CD8-positive, alpha-beta T cell (primary cell): ENCODE measurements at regions of chr5 and their contacts with region 1.

Region 1: DNA sequence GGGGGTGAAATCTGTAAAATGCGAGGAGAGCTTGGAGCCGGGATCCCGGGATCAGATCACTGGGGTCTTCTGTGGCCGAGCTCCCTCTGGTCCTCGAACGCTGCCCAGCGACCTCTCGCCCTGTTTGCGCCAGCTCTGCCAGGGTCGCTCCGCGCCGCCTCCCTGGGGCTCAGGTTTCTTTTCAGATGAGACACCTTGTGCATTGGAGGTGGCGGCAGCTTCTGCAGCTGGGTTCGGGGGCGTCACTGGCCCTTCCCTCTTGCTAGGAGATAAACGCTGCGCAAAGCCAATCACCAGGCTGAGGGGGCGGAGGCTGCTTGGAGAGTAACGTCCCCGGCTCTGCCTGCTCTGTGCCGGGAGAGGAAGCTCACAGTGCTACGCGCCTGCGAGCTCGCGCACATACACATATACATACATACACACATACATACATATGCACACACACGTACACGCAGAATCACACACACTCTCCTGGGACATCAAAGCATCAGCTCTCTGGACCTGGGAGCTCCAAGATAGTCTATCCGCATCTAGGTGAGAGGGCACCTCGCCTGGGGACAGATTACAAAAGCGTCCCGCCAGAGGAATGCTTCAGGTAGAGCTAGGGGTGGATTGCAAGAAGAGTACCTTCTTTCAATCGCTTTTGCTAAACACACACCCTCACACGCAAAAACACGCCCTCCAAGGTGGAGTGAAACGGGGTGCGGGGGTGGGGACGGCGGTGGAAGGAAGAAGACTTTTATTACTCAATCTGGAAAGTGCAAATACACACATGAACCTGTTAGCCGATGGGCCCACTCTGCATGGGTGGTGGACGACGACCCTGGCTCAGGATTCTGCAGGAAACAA is at the start of gene ST8SIA4:
- DNase-seq: peak; percentile 81 to 96 (median 92)
- ATAC-seq: peak; percentile 72
- H3K4me3 ChIP-seq: peak within 1 kb of the TSS; percentile 72 to 92
- H3K4me3 Mint-ChIP-seq: peak within 1 kb of the TSS; percentile 88
- H3K27ac ChIP-seq: peak within 1 kb of the TSS; percentile 70 to 89
- H3K27ac Mint-ChIP-seq: peak within 1 kb of the TSS; percentile 97
- H3K4me1 ChIP-seq: peaks cover 19% of the 10 kb centered on the region
- H3K4me1 Mint-ChIP-seq: peaks cover 56% of the 10 kb centered on the region
- H3K27me3 ChIP-seq: no peaks in the 10 kb centered on the region
- H3K27me3 Mint-ChIP-seq: no peaks in the 10 kb centered on the region
- CTCF ChIP-seq: no peak
- total RNA-seq, gene ST8SIA4: 15.6 to 16.4 TPM

Region 2: GRCh38 chr5:98928873-98929696 is 1974.2 kb before region 1 on chr5 and contains the start of gene CHD1:
- CTCF ChIA-PET with region 1: no interaction called
- POLR2A ChIA-PET with region 1: interaction called, 12 read pairs
- intact Hi-C with region 1: loop called (anchors 1 to 5 kb)
- DNase-seq: peak; percentile 91 to 99 (median 94)
- ATAC-seq: peak; percentile 67
- H3K4me3 ChIP-seq: peak within 1 kb of the TSS; percentile 97 to 100
- H3K4me3 Mint-ChIP-seq: peak within 1 kb of the TSS; percentile 96
- H3K27ac ChIP-seq: peak within 1 kb of the TSS; percentile 100
- H3K27ac Mint-ChIP-seq: peak within 1 kb of the TSS; percentile 100
- H3K4me1 ChIP-seq: peaks cover 65% of the 10 kb centered on the region
- H3K4me1 Mint-ChIP-seq: peaks cover 69% of the 10 kb centered on the region
- H3K27me3 ChIP-seq: no peaks in the 10 kb centered on the region
- H3K27me3 Mint-ChIP-seq: no peaks in the 10 kb centered on the region
- CTCF ChIP-seq: no peak
- total RNA-seq, gene CHD1: 319 to 327 TPM

Region 3: GRCh38 chr5:100535060-100536005 is 367.9 kb before region 1 on chr5 and contains the start of gene FAM174A:
- CTCF ChIA-PET with region 1: interaction called, 4 read pairs
- POLR2A ChIA-PET with region 1: interaction called, 8 read pairs
- intact Hi-C with region 1: loop called (anchors 1 to 5 kb)
- DNase-seq: peak; percentile 88 to 98 (median 94)
- ATAC-seq: peak; percentile 86
- H3K4me3 ChIP-seq: peak within 1 kb of the TSS; percentile 92 to 93
- H3K4me3 Mint-ChIP-seq: peak within 1 kb of the TSS; percentile 88
- H3K27ac ChIP-seq: peak within 1 kb of the TSS; percentile 90 to 93
- H3K27ac Mint-ChIP-seq: peak within 1 kb of the TSS; percentile 96
- H3K4me1 ChIP-seq: peaks cover 16% of the 10 kb centered on the region
- H3K4me1 Mint-ChIP-seq: peaks cover 39% of the 10 kb centered on the region
- H3K27me3 ChIP-seq: no peaks in the 10 kb centered on the region
- H3K27me3 Mint-ChIP-seq: no peaks in the 10 kb centered on the region
- CTCF ChIP-seq: no peak
- total RNA-seq, gene FAM174A: 4.9 to 6.5 TPM

Region 4: GRCh38 chr5:100731768-100732167 is 171.5 kb before region 1 on chr5:
- CTCF ChIA-PET with region 1: no interaction called
- POLR2A ChIA-PET with region 1: interaction called, 3 read pairs
- intact Hi-C with region 1: loop called in 1 of 2 experiments (anchors 5 kb)
- DNase-seq: peak in 5 of 9 experiments; percentile 2 to 69 (median 18)
- ATAC-seq: peak; percentile 92
- H3K4me3 ChIP-seq: peak overlapping the region; percentile 8 to 34
- H3K4me3 Mint-ChIP-seq: peak overlapping the region; percentile 75
- H3K27ac ChIP-seq: peak overlapping the region in 1 of 2 experiments; percentile 43
- H3K27ac Mint-ChIP-seq: peak overlapping the region; percentile 55
- H3K4me1 ChIP-seq: no peaks in the 10 kb centered on the region
- H3K4me1 Mint-ChIP-seq: peaks cover 12% of the 10 kb centered on the region
- H3K27me3 ChIP-seq: no peaks in the 10 kb centered on the region
- H3K27me3 Mint-ChIP-seq: no peaks in the 10 kb centered on the region
- CTCF ChIP-seq: no peak

Region 5: GRCh38 chr5:100852988-100853449 is 50.2 kb before region 1 on chr5:
- CTCF ChIA-PET with region 1: interaction called, 8 read pairs
- POLR2A ChIA-PET with region 1: no interaction called
- intact Hi-C with region 1: loop called (anchors 5 kb)
- DNase-seq: peak in 1 of 9 experiments; percentile 32
- ATAC-seq: peak; percentile 38
- H3K4me3 ChIP-seq: no peak overlapping the region
- H3K4me3 Mint-ChIP-seq: peak overlapping the region; percentile 36
- H3K27ac ChIP-seq: peak overlapping the region in 1 of 2 experiments; percentile 57
- H3K27ac Mint-ChIP-seq: peak overlapping the region; percentile 76
- H3K4me1 ChIP-seq: peaks cover 8% of the 10 kb centered on the region
- H3K4me1 Mint-ChIP-seq: peaks cover 44% of the 10 kb centered on the region
- H3K27me3 ChIP-seq: no peaks in the 10 kb centered on the region
- H3K27me3 Mint-ChIP-seq: no peaks in the 10 kb centered on the region
- CTCF ChIP-seq: no peak

Region 6: GRCh38 chr5:100939981-100940380 is 36.7 kb after region 1 on chr5:
- CTCF ChIA-PET with region 1: no interaction called
- POLR2A ChIA-PET with region 1: no interaction called
- intact Hi-C with region 1: loop called in 1 of 2 experiments (anchors 5 kb)
- DNase-seq: no peak
- ATAC-seq: no peak
- H3K4me3 ChIP-seq: no peak overlapping the region
- H3K4me3 Mint-ChIP-seq: no peak overlapping the region
- H3K27ac ChIP-seq: no peak overlapping the region
- H3K27ac Mint-ChIP-seq: no peak overlapping the region
- H3K4me1 ChIP-seq: no peaks in the 10 kb centered on the region
- H3K4me1 Mint-ChIP-seq: no peaks in the 10 kb centered on the region
- H3K27me3 ChIP-seq: no peaks in the 10 kb centered on the region
- H3K27me3 Mint-ChIP-seq: no peaks in the 10 kb centered on the region
- CTCF ChIP-seq: no peak

Region 7: GRCh38 chr5:100965291-100965690 is 62.0 kb after region 1 on chr5:
- CTCF ChIA-PET with region 1: no interaction called
- POLR2A ChIA-PET with region 1: no interaction called
- intact Hi-C with region 1: no loop called
- DNase-seq: no peak
- ATAC-seq: no peak
- H3K4me3 ChIP-seq: no peak overlapping the region
- H3K4me3 Mint-ChIP-seq: no peak overlapping the region
- H3K27ac ChIP-seq: no peak overlapping the region
- H3K27ac Mint-ChIP-seq: no peak overlapping the region
- H3K4me1 ChIP-seq: no peaks in the 10 kb centered on the region
- H3K4me1 Mint-ChIP-seq: no peaks in the 10 kb centered on the region
- H3K27me3 ChIP-seq: no peaks in the 10 kb centered on the region
- H3K27me3 Mint-ChIP-seq: no peaks in the 10 kb centered on the region
- CTCF ChIP-seq: no peak

Region 8: DNA sequence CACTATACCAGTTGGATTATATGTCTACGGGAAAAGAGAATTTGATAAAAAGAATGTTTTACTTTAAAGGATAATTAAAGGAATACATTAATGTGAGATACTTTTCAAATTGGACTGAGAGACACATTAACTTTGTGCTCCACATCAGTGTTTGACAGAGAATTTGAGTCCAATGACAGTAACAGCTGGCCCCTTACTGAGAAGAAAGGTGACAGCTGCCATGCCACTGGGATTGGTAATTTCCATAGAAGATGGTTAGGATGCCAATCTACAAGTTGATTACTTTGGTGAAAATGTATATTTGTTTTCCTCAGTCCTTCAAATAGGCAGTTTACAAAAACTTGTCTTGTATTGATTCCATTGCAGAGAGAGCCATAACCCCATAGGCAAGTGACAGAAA is 814.5 kb after region 1 on chr5:
- CTCF ChIA-PET with region 1: no interaction called
- POLR2A ChIA-PET with region 1: no interaction called
- intact Hi-C with region 1: no loop called
- DNase-seq: no peak
- ATAC-seq: no peak
- H3K4me3 ChIP-seq: no peak overlapping the region
- H3K4me3 Mint-ChIP-seq: no peak overlapping the region
- H3K27ac ChIP-seq: no peak overlapping the region
- H3K27ac Mint-ChIP-seq: no peak overlapping the region
- H3K4me1 ChIP-seq: no peaks in the 10 kb centered on the region
- H3K4me1 Mint-ChIP-seq: no peaks in the 10 kb centered on the region
- H3K27me3 ChIP-seq: no peaks in the 10 kb centered on the region
- H3K27me3 Mint-ChIP-seq: no peaks in the 10 kb centered on the region
- CTCF ChIP-seq: no peak